Pancreas (tissue), 10 donors: ENCODE measurements at regions of chr3 and their contacts with region 1.

Region 1: GRCh38 chr3:54853573-54854404 is 74.1 kb downstream of the LRTM1 start:
- DNase-seq: peak; percentile 39 to 93 (median 74)
- ATAC-seq: peak; percentile 75 to 97 (median 94)
- H3K4me3 ChIP-seq: no peak overlapping the region
- H3K27ac ChIP-seq: no peak overlapping the region
- H3K4me1 ChIP-seq: no peaks in the 10 kb centered on the region
- H3K27me3 ChIP-seq: peaks cover 0 to 3% (median 0%) of the 10 kb centered on the region in 4 donors
- CTCF ChIP-seq: peak; percentile 53 to 80 (median 76)

Region 2: GRCh38 chr3:56251343-56251945 is 1397.7 kb after region 1 on chr3:
- intact Hi-C with region 1: loop called in 1 of 3 experiments (anchors 10 kb)
- DNase-seq: peak in 3 of 6 donors; percentile 2 to 51 (median 24)
- ATAC-seq: peak in 3 of 4 donors; percentile 58 to 67 (median 59)
- H3K4me3 ChIP-seq: no peak overlapping the region
- H3K27ac ChIP-seq: no peak overlapping the region
- H3K4me1 ChIP-seq: no peaks in the 10 kb centered on the region
- H3K27me3 ChIP-seq: no peaks in the 10 kb centered on the region
- CTCF ChIP-seq: peak; percentile 34 to 73 (median 60)